K562 (cell line): ENCODE measurements at regions of chr16 and their contacts with region 1.

Region 1: DNA sequence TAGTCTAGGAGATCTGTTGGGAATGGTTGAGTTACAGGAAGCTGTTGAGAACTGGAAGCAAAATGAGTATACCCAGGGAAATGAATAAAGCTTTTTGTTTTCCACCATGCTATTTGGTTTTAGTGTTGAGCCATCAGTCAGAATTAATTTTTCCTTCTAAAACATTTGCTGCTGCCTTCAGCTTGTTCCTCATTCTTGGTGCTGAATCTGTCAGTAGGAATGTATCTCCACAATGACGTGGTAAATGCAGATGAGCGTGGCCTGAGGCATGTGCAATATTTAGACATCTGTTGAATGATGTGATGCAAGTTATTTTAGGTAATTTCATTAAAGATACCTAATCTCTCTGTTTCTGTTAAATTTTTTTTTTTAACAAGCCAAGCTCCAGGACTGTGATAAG is 10.9 kb downstream of the HAPSTR1 start:
- DNase-seq: no peak
- ATAC-seq: no peak
- H3K4me3 ChIP-seq: no peak overlapping the region
- H3K27ac ChIP-seq: no peak overlapping the region
- H3K4me1 ChIP-seq: peaks cover 5 to 34% of the 10 kb centered on the region in 2 experiments; a peak in 3 of 5 replicates
- H3K27me3 ChIP-seq: no peaks in the 10 kb centered on the region
- CTCF ChIP-seq: no peak
- EP300 ChIP-seq: no peak
- POLR2A ChIP-seq: no peak
- RAD21 ChIP-seq: no peak

Region 2: GRCh38 chr16:8963825-8964441 is 138.4 kb before region 1 on chr16 and contains the start of gene USP7:
- CTCF ChIA-PET with region 1: no interaction called
- POLR2A ChIA-PET with region 1: no interaction called
- in situ Hi-C with region 1: no loop called
- intact Hi-C with region 1: no loop called
- DNase-seq: peak; percentile 93 to 94 (median 93)
- ATAC-seq: peak; percentile 91
- H3K4me3 ChIP-seq: peak within 1 kb of the TSS; percentile 60
- H3K27ac ChIP-seq: peak within 1 kb of the TSS; percentile 65
- H3K4me1 ChIP-seq: peaks cover 32 to 48% of the 10 kb centered on the region in 2 experiments
- H3K27me3 ChIP-seq: no peaks in the 10 kb centered on the region
- CTCF ChIP-seq: 0 out of 6 replicates have a peak, but pooled peaks of 1 of the 3 experiments have one; percentile 4
- EP300 ChIP-seq: no peak
- POLR2A ChIP-seq: peak; percentile 50; the same call in 1 of the 2 replicates
- RAD21 ChIP-seq: no peak
- polyA plus RNA-seq, gene USP7: 17.1 to 27.2 TPM

Region 3: GRCh38 chr16:9126609-9127008 is 24.2 kb after region 1 on chr16:
- CTCF ChIA-PET with region 1: no interaction called
- POLR2A ChIA-PET with region 1: interaction called, 7 read pairs
- in situ Hi-C with region 1: no loop called
- intact Hi-C with region 1: loop called (anchors 1 kb)
- DNase-seq: no peak
- ATAC-seq: no peak
- H3K4me3 ChIP-seq: no peak overlapping the region
- H3K27ac ChIP-seq: no peak overlapping the region
- H3K4me1 ChIP-seq: peaks cover 10 to 13% of the 10 kb centered on the region in 2 experiments
- H3K27me3 ChIP-seq: no peaks in the 10 kb centered on the region
- CTCF ChIP-seq: no peak
- EP300 ChIP-seq: no peak
- POLR2A ChIP-seq: no peak
- RAD21 ChIP-seq: no peak

Region 4: GRCh38 chr16:9235867-9236266 is 133.5 kb after region 1 on chr16:
- CTCF ChIA-PET with region 1: no interaction called
- POLR2A ChIA-PET with region 1: no interaction called
- in situ Hi-C with region 1: no loop called
- intact Hi-C with region 1: no loop called
- DNase-seq: no peak
- ATAC-seq: no peak
- H3K4me3 ChIP-seq: no peak overlapping the region
- H3K27ac ChIP-seq: no peak overlapping the region
- H3K4me1 ChIP-seq: no peaks in the 10 kb centered on the region
- H3K27me3 ChIP-seq: peaks cover 0 to 3% of the 10 kb centered on the region in 2 experiments; a peak in 2 of 5 replicates
- CTCF ChIP-seq: no peak
- EP300 ChIP-seq: no peak
- POLR2A ChIP-seq: no peak
- RAD21 ChIP-seq: no peak